HCT116 (cell line): ENCODE measurements at regions of chr11 and their contacts with region 1.

Region 1: GRCh38 chr11:68297812-68298658 is 14.4 kb upstream of the LRP5 start:
- DNase-seq: peak; percentile 52
- ATAC-seq: peak; percentile 97
- H3K4me3 ChIP-seq: peak overlapping the region in 1 of 2 experiments; percentile 19; a peak in 2 of 4 replicates
- H3K27ac ChIP-seq: no peak overlapping the region
- H3K4me1 ChIP-seq: peaks cover 18 to 35% of the 10 kb centered on the region in 2 experiments
- H3K27me3 ChIP-seq: no peaks in the 10 kb centered on the region
- CTCF ChIP-seq: peak; percentile 94 to 97 (median 96)
- POLR2A ChIP-seq: no peak
- RAD21 ChIP-seq: peak; percentile 98

Region 2: DNA sequence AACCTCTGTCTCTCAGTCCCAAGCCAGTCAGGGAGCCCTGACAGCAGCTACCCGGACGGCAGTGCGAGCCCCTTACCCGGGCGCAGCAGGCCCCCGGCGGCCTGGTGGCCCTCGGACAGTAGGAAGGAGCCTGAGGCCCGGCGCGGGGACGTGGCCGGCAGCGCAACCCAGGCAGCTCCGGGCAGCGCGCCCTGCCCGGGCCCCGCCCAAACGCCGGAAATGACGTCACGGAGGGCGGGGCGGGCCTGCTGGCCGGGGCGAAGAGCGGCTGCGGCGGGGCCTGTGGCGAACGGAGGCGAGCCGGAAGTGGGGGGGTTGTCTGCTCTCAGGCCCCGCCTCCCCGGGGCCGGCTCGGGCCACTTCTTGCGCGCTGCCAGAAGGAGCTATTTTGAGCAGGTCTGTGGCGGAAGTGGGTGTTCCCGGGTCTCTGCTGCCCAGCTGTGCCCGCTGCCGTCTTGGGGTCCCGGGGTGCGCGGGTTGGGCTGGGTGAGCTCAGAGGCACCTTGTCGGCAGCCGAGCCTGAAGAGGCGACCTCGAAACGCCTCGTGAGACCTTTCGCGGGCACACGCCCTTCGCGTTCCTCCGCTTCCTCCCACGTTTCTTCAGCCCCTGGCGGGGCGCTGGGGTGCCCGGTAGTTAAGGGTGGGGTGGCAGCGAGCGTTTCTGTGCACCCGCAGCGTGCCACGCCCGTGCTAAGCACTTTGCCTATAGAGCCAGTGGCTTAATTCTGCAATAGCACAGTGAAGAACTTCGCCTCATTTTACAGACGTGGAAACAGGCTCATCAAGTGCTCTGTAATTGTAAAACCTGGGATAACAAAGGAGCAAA is 26.0 kb before region 1 on chr11 and contains the start of gene C11orf24:
- CTCF ChIA-PET with region 1: interaction called, 30 read pairs
- POLR2A ChIA-PET with region 1: interaction called, 4 read pairs
- RAD21 ChIA-PET with region 1: no interaction called
- intact Hi-C with region 1: no loop called
- DNase-seq: peak; percentile 79
- ATAC-seq: peak; percentile 86
- H3K4me3 ChIP-seq: peak within 1 kb of the TSS; percentile 97 to 98
- H3K27ac ChIP-seq: peak within 1 kb of the TSS; percentile 90
- H3K4me1 ChIP-seq: peaks cover 29 to 60% of the 10 kb centered on the region in 2 experiments
- H3K27me3 ChIP-seq: no peaks in the 10 kb centered on the region
- CTCF ChIP-seq: no peak
- POLR2A ChIP-seq: peak; percentile 87
- RAD21 ChIP-seq: no peak
- total RNA-seq, gene C11orf24: 37.8 TPM

Region 3: GRCh38 chr11:68430801-68431200 is 132.8 kb after region 1 on chr11:
- CTCF ChIA-PET with region 1: no interaction called
- POLR2A ChIA-PET with region 1: no interaction called
- RAD21 ChIA-PET with region 1: no interaction called
- intact Hi-C with region 1: no loop called
- DNase-seq: no peak
- ATAC-seq: no peak
- H3K4me3 ChIP-seq: no peak overlapping the region
- H3K27ac ChIP-seq: no peak overlapping the region
- H3K4me1 ChIP-seq: no peaks in the 10 kb centered on the region
- H3K27me3 ChIP-seq: no peaks in the 10 kb centered on the region
- CTCF ChIP-seq: no peak
- POLR2A ChIP-seq: no peak
- RAD21 ChIP-seq: no peak

Region 4: DNA sequence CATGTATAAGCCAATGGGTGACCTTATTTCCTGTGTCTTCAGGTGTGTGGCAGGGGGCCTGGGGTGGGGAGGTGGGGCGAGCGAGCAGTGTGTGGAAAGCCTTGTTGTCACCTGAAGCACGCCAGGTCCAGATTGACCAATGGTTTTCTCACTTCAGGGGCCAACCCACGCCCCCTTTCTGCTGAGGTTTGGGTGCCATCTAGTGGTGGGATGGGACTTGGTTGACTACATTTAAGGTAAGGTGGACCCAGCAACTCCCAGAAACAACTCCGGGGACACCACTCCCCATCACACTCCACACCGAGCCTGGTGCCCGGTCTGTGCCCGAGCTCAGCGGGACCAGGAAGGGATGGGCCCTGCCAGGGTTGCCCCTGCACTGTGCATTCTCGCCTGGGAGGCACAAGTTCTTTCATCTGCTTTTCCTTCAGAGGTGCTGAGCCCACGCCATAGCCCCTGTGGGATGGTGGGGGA is 790.7 kb after region 1 on chr11:
- CTCF ChIA-PET with region 1: no interaction called
- POLR2A ChIA-PET with region 1: no interaction called
- RAD21 ChIA-PET with region 1: no interaction called
- intact Hi-C with region 1: no loop called
- DNase-seq: peak; percentile 75
- ATAC-seq: peak; percentile 91
- H3K4me3 ChIP-seq: no peak overlapping the region
- H3K27ac ChIP-seq: 0 out of 2 replicates have a peak overlapping the region, but pooled peaks have one; percentile 13
- H3K4me1 ChIP-seq: peaks cover 9 to 16% of the 10 kb centered on the region in 2 experiments
- H3K27me3 ChIP-seq: no peaks in the 10 kb centered on the region
- CTCF ChIP-seq: peak; percentile 78 to 83 (median 79)
- POLR2A ChIP-seq: no peak
- RAD21 ChIP-seq: peak; percentile 94